Activated T-helper 2 cell treated with anti-CD3 and anti-CD28 coated beads, Interferon-gamma antibody, Interleukin-2, Interleukin-4, amounts not matched to agents 10 μg/mL and 5 μg/mL and 100 μg/mL, durations not matched to agents 14 hours and 24 hours and 36 hours (primary cell): ENCODE measurements at regions of chr11 and their contacts with region 1.

Region 1: DNA sequence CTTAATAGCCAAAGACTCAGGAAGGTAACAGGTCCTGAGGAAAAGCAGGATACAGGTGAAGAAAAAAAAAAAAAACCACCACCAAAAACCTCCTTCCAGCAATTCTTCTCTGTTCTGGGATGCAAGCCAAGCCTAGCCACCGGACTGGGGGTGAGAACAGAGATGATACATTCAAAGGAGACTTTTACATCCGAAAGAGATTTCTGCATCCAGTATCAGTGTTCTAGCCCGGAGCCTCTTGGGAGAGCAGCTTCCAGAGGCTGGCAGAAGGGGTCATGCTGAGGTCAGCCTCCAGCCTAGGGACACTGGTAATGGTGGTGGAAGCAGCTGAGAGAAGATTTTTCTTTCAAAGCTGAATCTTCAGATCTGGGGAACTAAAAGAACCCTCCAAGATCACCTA is 76.2 kb downstream of the KCNC1 start:
- DNase-seq: no peak
- H3K4me3 Mint-ChIP-seq: no peak overlapping the region
- H3K27ac Mint-ChIP-seq: no peak overlapping the region
- H3K4me1 Mint-ChIP-seq: no peaks in the 10 kb centered on the region
- H3K27me3 Mint-ChIP-seq: no peaks in the 10 kb centered on the region

Region 2: GRCh38 chr11:17760102-17761029 is 50.4 kb before region 1 on chr11:
- intact Hi-C with region 1: no loop called
- DNase-seq: no peak
- H3K4me3 Mint-ChIP-seq: no peak overlapping the region
- H3K27ac Mint-ChIP-seq: no peak overlapping the region
- H3K4me1 Mint-ChIP-seq: peaks cover 1% of the 10 kb centered on the region
- H3K27me3 Mint-ChIP-seq: no peaks in the 10 kb centered on the region

Region 3: GRCh38 chr11:17839973-17840611 is 29.3 kb after region 1 on chr11:
- intact Hi-C with region 1: no loop called
- DNase-seq: no peak
- H3K4me3 Mint-ChIP-seq: no peak overlapping the region
- H3K27ac Mint-ChIP-seq: no peak overlapping the region
- H3K4me1 Mint-ChIP-seq: peaks cover 2% of the 10 kb centered on the region
- H3K27me3 Mint-ChIP-seq: no peaks in the 10 kb centered on the region

Region 4: GRCh38 chr11:17915500-17916143 is 104.9 kb after region 1 on chr11:
- intact Hi-C with region 1: loop called (anchors 10 kb)
- DNase-seq: no peak
- H3K4me3 Mint-ChIP-seq: no peak overlapping the region
- H3K27ac Mint-ChIP-seq: no peak overlapping the region
- H3K4me1 Mint-ChIP-seq: peaks cover 6% of the 10 kb centered on the region
- H3K27me3 Mint-ChIP-seq: no peaks in the 10 kb centered on the region

Region 5: DNA sequence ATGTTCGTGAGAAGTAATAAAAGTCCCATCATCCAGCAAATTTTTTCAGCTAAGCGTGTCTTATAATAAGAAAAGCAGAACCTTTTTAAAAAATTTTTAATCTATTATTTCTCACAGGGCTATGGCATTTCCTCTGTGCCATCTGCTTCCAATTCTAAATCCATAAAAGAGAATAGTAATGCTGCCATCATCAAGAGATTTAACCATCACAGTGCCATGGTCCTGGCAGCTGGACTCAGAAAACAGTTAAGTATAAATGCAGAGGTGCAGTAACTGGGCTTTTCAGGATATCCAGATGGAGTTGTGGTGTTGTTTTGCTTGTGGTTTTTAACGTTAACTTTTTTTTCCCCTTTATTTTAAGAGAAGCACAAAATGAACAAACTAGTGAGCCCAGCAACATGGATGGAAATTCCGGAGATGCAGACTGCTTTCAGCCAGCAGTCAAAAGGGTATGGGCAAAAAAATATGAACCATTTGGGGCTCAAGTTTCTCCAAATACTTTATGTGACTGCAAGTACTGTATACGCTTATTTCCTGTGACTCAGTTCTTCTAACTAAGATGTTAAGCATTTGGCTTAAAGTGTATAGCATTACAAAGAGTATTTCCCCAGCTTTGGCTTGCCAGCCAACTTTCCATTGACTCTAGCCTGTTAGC is 536.9 kb after region 1 on chr11:
- intact Hi-C with region 1: no loop called
- DNase-seq: no peak
- H3K4me3 Mint-ChIP-seq: no peak overlapping the region
- H3K27ac Mint-ChIP-seq: no peak overlapping the region
- H3K4me1 Mint-ChIP-seq: peaks cover 2% of the 10 kb centered on the region
- H3K27me3 Mint-ChIP-seq: no peaks in the 10 kb centered on the region